ENCODE measurements at regions of chr1 and their contacts with region 1.

Region 1: GRCh38 chr1:112619520-112620376 is at the start of gene CAPZA1:
- DNase-seq: peak; percentile 95
- ATAC-seq: peak; percentile 85
- H3K4me3 Mint-ChIP-seq: peak within 1 kb of the TSS; percentile 99
- H3K27ac Mint-ChIP-seq: peak within 1 kb of the TSS; percentile 100
- H3K4me1 Mint-ChIP-seq: peaks cover 34% of the 10 kb centered on the region
- H3K27me3 Mint-ChIP-seq: no peaks in the 10 kb centered on the region
- total RNA-seq, gene CAPZA1: 251 to 302 TPM

Region 2: GRCh38 chr1:110872745-110873720 is 1746.7 kb before region 1 on chr1 and contains the start of gene CD53:
- CTCF ChIA-PET with region 1: no interaction called
- POLR2A ChIA-PET with region 1: interaction called, 3 read pairs
- intact Hi-C with region 1: loop called in 1 of 2 experiments (anchors 10 kb)
- DNase-seq: peak; percentile 62
- ATAC-seq: peak; percentile 33
- H3K4me3 Mint-ChIP-seq: peak within 1 kb of the TSS; percentile 85
- H3K27ac Mint-ChIP-seq: peak within 1 kb of the TSS; percentile 95
- H3K4me1 Mint-ChIP-seq: peaks cover 39% of the 10 kb centered on the region
- H3K27me3 Mint-ChIP-seq: no peaks in the 10 kb centered on the region
- total RNA-seq, gene CD53: 238 to 244 TPM

Region 3: DNA sequence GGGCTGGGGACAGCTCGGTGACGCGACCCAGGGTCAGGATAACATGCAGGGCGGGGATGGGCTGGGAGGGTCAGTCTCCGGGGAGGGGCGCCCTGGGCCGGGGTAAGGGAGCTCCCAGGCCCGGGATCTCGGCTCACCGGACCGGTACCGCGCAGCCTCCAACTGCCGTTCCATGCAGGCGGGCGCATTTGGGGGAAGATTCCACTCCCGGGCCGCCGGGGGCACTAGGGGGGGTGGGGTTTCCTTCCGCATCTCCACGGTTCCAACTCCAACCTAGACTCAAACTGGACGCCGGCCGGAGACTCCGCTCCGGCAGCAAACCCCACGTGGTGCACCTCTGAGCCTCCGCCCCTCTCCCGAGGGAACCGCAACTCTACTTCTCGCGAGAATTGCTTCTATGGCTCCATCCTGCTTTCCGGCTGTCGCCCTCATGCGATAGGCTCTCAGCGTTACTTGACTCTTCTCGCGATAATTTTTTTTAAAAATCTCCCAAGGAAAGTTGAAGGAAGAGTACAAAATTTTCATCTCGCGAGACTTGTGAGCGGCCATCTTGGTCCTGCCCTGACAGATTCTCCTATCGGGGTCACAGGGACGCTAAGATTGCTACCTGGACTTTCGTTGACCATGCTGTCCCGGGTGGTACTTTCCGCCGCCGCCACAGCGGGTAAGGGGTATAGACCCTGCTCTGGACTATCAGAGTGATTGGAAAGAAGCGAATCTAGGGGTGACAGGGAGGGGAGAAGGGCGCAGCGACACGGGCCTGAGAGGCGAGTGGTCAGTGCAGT is 1170.6 kb before region 1 on chr1 and contains the starts of genes ATP5PB and WDR77:
- CTCF ChIA-PET with region 1: no interaction called
- POLR2A ChIA-PET with region 1: no interaction called
- intact Hi-C with region 1: loop called in 1 of 2 experiments (anchors 5 kb)
- DNase-seq: peak; percentile 94
- ATAC-seq: peak; percentile 98
- H3K4me3 Mint-ChIP-seq: peak within 1 kb of the TSS; percentile 99
- H3K27ac Mint-ChIP-seq: peak within 1 kb of the TSS; percentile 98
- H3K4me1 Mint-ChIP-seq: peaks cover 79% of the 10 kb centered on the region
- H3K27me3 Mint-ChIP-seq: no peaks in the 10 kb centered on the region
- total RNA-seq, gene ATP5PB: 292 to 301 TPM
- total RNA-seq, gene WDR77: 42.5 to 53.6 TPM

Region 4: GRCh38 chr1:112466078-112466660 is 153.6 kb before region 1 on chr1:
- CTCF ChIA-PET with region 1: no interaction called
- POLR2A ChIA-PET with region 1: no interaction called
- intact Hi-C with region 1: loop called in 1 of 2 experiments (anchors 5 kb)
- DNase-seq: peak; percentile 93
- ATAC-seq: peak; percentile 97
- H3K4me3 Mint-ChIP-seq: peak overlapping the region; percentile 67
- H3K27ac Mint-ChIP-seq: peak overlapping the region; percentile 83
- H3K4me1 Mint-ChIP-seq: peaks cover 12% of the 10 kb centered on the region
- H3K27me3 Mint-ChIP-seq: peaks cover 15% of the 10 kb centered on the region

Region 5: DNA sequence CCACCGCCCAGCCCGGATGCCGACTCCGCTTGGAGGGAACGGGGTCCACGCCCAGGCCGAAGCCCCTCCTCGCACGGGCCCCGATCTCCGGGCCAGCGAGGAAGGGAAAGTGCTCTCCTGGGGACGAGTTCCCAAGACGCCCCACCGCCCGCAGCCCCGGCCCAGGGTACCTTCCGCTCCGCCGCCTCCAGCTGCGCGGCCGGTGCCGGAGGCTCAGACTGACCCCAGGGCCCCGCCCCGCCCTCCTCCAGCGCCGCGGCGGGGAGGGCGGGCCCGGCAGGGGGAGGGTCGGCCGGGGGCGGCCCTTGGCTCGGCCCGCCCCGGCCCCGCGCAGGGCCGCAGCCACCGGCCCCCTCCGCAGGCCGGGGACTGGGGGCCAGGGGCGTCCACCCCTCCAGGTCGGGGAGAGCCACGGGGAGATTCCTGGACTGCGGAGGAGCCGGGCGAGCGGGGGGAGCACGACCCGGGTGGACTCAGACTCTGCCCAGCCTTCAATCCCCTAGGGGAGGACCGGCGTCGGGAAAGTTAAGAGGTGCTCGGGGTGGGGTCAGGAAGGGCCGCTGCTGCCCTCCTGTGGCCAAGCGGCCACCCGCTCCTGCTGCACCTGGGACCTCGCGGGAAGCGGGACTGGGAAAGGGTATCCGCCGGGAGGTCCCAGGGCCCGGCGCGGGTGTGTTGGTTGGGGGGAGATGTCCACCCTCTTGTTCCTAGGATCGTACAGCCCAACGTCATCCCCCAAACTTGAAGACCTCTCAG is 87.3 kb after region 1 on chr1 and contains the start of gene RHOC:
- CTCF ChIA-PET with region 1: interaction called, 7 read pairs
- POLR2A ChIA-PET with region 1: no interaction called
- intact Hi-C with region 1: loop called (anchors 1 to 2 kb)
- DNase-seq: peak; percentile 85
- ATAC-seq: peak; percentile 43
- H3K4me3 Mint-ChIP-seq: peak within 1 kb of the TSS; percentile 58
- H3K27ac Mint-ChIP-seq: peak within 1 kb of the TSS; percentile 45
- H3K4me1 Mint-ChIP-seq: peaks cover 48% of the 10 kb centered on the region
- H3K27me3 Mint-ChIP-seq: peaks cover 2% of the 10 kb centered on the region
- total RNA-seq, gene RHOC: 32.8 to 45.7 TPM

Region 6: DNA sequence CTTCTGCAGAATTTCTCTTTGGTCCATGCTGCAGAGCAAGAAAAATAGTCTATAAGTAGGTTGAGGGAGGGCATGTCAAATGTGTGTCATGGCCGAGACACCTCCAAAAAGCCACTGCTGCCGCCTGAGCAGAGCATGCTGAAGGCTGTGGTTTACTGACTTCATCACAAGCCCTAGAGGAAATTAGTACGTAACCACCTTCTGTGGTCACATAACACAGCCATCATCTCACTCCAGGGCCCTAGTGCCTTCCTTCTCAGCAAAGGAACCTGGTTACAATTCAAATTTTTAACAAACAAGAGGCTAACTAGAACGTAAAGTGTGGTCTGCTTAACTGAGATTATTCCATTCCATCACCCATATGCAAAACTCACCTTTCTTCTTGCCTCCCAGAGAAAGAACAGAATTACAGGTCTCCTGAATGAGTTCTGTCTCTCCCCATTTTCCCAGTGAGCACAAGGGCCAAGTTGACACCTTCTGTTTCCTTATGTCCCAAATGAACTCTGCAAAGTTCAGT is 1251.9 kb after region 1 on chr1 and contains the start of gene PTPN22:
- CTCF ChIA-PET with region 1: no interaction called
- POLR2A ChIA-PET with region 1: no interaction called
- intact Hi-C with region 1: loop called in 1 of 2 experiments (anchors 2 kb)
- DNase-seq: peak; percentile 89
- ATAC-seq: peak; percentile 84
- H3K4me3 Mint-ChIP-seq: peak within 1 kb of the TSS; percentile 84
- H3K27ac Mint-ChIP-seq: peak within 1 kb of the TSS; percentile 99
- H3K4me1 Mint-ChIP-seq: peaks cover 72% of the 10 kb centered on the region
- H3K27me3 Mint-ChIP-seq: no peaks in the 10 kb centered on the region
- total RNA-seq, gene PTPN22: 42.4 to 52.6 TPM